ENCODE measurements at regions of chr9 and their contacts with region 1.

Region 1: GRCh38 chr9:73327149-73327548 is 175.5 kb downstream of the ANXA1 start:
- DNase-seq: no peak

Region 2: GRCh38 chr9:73269430-73270101 is 57.6 kb before region 1 on chr9:
- intact Hi-C with region 1: loop called in 1 of 2 experiments (anchors 10 kb)
- DNase-seq: no peak

Region 3: GRCh38 chr9:73294336-73294735 is 32.8 kb before region 1 on chr9:
- intact Hi-C with region 1: loop called in 1 of 2 experiments (anchors 2 kb)
- DNase-seq: no peak

Region 4: GRCh38 chr9:73380411-73380810 is 53.3 kb after region 1 on chr9:
- intact Hi-C with region 1: no loop called
- DNase-seq: no peak